HEK293 (cell line): ENCODE measurements at regions of chrX and their contacts with region 1.

Region 1: DNA sequence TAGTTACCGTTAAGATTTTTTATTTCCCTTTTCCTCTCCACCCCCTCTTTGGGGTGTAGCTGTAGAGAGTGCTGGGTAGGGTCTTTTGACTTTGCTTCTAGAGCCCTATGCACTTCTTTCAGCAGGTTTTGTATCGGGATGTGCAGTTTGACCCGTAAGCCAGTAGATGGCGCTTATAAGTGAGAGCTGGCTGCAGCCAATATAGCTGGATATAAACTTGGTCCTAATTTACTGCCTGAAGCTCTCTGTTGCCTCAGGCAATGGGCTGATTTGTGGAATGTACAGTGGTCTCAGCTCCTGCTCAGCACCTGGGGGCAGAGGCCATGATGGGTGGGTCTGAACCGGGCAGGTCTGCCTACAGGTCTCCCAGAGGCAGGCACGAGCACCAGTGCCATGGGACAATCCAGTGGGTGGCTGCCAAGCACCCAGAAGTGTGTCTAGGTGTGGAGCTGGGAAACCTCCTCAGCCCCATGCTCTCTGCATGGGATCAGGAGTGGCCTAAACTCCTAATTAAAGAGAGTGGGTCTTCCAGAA is 146.5 kb downstream of the SPANXN1 start:
- H3K4me3 ChIP-seq: no peak overlapping the region
- H3K27ac ChIP-seq: no peak overlapping the region
- H3K4me1 ChIP-seq: no peaks in the 10 kb centered on the region
- CTCF ChIP-seq: no peak

Region 2: GRCh38 chrX:144566592-144566991 is 827.2 kb before region 1 on chrX:
- CTCF ChIA-PET with region 1: no interaction called
- POLR2A ChIA-PET with region 1: no interaction called
- H3K4me3 ChIP-seq: no peak overlapping the region
- H3K27ac ChIP-seq: no peak overlapping the region
- H3K4me1 ChIP-seq: no peaks in the 10 kb centered on the region
- CTCF ChIP-seq: no peak

Region 3: DNA sequence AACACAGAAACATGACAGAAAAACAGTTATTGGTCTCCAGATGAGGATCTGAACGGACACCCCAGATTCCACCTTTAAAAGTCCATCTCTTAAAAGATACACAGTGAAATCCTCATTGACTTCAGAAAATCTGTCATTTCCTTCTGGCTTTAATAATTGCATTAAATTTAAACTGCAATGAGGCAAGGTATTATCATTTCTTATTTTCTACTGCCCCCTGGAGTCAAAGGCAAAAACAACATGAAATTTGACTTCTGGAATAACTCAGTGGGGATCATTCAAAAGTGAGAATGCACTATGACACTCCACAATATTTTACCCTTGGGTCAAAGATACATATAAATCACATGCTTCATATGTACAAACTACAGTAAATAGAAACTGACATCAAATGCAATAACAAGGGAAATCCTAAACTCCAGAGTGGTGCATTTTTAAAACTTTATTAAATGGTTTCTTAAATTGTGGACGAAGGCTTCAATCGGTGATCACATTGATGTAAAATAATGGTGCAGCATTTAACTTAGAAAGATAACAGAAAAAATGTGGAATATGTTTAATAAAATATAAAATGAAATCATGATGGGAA is 202.9 kb before region 1 on chrX:
- CTCF ChIA-PET with region 1: no interaction called
- POLR2A ChIA-PET with region 1: no interaction called
- H3K4me3 ChIP-seq: no peak overlapping the region
- H3K27ac ChIP-seq: no peak overlapping the region
- H3K4me1 ChIP-seq: no peaks in the 10 kb centered on the region
- CTCF ChIP-seq: peak; percentile 19; the same call in 1 of the 2 replicates

Region 4: DNA sequence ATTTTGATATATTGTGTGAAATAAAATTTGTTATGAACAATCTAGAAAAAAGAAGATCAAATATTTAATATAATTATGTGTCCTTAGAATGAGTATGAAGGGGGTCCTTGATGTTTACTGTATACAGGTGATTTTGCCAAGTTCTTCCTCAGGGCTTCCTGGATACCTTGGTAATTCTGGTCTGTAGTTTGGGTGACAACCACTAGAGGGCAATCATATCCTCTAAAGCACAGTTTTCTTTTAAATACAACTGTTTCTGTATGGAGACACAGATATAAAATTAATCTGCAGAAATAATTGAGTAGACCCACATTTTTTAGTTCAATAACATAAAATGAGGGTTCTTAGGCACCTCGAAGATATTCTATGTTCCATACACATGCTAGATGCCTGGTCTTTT is 11.2 kb after region 1 on chrX:
- CTCF ChIA-PET with region 1: interaction called, 10 read pairs
- POLR2A ChIA-PET with region 1: no interaction called
- H3K4me3 ChIP-seq: no peak overlapping the region
- H3K27ac ChIP-seq: no peak overlapping the region
- H3K4me1 ChIP-seq: no peaks in the 10 kb centered on the region
- CTCF ChIP-seq: peak; percentile 26; the same call in 1 of the 2 replicates

Region 5: DNA sequence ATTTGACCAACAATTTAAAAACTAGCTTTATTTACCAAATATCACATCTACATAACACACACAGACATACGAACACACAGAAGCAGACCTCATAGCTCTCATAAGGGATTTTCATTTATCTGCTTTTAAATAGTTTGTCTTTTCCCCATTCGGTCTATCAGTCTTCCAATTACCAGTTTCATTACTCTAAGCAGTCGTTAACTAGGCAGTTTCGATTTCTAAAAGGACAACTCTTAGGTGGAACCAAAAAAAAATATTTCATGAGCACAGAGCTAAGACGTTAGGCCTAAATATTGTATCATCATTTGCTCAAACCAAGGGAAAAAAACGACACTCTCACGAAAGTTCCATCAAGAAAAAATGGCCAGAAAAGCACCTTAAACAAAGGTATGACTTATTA is 82.0 kb after region 1 on chrX:
- CTCF ChIA-PET with region 1: no interaction called
- POLR2A ChIA-PET with region 1: no interaction called
- H3K4me3 ChIP-seq: no peak overlapping the region
- H3K27ac ChIP-seq: no peak overlapping the region
- H3K4me1 ChIP-seq: no peaks in the 10 kb centered on the region
- CTCF ChIP-seq: no peak